ENCODE measurements at regions of chr6 and their contacts with region 1.

Region 1: DNA sequence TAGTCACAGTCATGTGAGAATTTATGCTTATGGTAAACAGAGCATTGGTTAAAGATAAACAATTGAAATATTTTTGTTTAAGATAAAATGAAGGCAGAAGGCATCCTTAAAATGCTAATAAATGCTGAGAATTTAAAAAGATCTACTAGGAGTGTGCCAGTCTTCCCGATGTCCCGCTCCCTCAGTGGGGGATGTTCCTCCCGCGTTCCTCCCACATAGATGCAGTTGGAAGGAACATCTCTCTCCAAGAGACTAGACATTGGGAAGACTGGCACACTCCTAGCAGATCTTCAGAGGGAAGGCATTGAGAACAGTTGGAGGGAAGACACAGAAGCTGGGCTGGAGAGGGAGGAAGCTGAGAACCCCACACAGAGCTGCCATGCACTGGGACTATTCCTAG is 203.3 kb downstream of the EDN1 start:
- DNase-seq: no peak
- H3K4me3 ChIP-seq: no peak overlapping the region
- H3K4me3 Mint-ChIP-seq: no peak overlapping the region
- H3K27ac Mint-ChIP-seq: no peak overlapping the region
- H3K4me1 ChIP-seq: peaks cover 9% of the 10 kb centered on the region; the same call in 1 of the 2 replicates
- H3K4me1 Mint-ChIP-seq: no peaks in the 10 kb centered on the region
- H3K27me3 ChIP-seq: no peaks in the 10 kb centered on the region
- H3K27me3 Mint-ChIP-seq: no peaks in the 10 kb centered on the region
- CTCF ChIP-seq: no peak

Region 2: GRCh38 chr6:12369781-12370262 is 123.6 kb before region 1 on chr6:
- CTCF ChIA-PET with region 1: no interaction called
- POLR2A ChIA-PET with region 1: interaction called, 13 read pairs
- intact Hi-C with region 1: no loop called
- DNase-seq: peak in 1 of 2 experiments; percentile 48
- H3K4me3 ChIP-seq: no peak overlapping the region
- H3K4me3 Mint-ChIP-seq: no peak overlapping the region
- H3K27ac Mint-ChIP-seq: peak overlapping the region; percentile 16
- H3K4me1 ChIP-seq: peaks cover 71% of the 10 kb centered on the region
- H3K4me1 Mint-ChIP-seq: peaks cover 52% of the 10 kb centered on the region
- H3K27me3 ChIP-seq: no peaks in the 10 kb centered on the region
- H3K27me3 Mint-ChIP-seq: no peaks in the 10 kb centered on the region
- CTCF ChIP-seq: no peak

Region 3: GRCh38 chr6:12516070-12516469 is 22.6 kb after region 1 on chr6:
- CTCF ChIA-PET with region 1: no interaction called
- POLR2A ChIA-PET with region 1: no interaction called
- intact Hi-C with region 1: no loop called
- DNase-seq: no peak
- H3K4me3 ChIP-seq: no peak overlapping the region
- H3K4me3 Mint-ChIP-seq: no peak overlapping the region
- H3K27ac Mint-ChIP-seq: no peak overlapping the region
- H3K4me1 ChIP-seq: no peaks in the 10 kb centered on the region; the same call in 1 of the 2 replicates
- H3K4me1 Mint-ChIP-seq: peaks cover 7% of the 10 kb centered on the region
- H3K27me3 ChIP-seq: no peaks in the 10 kb centered on the region
- H3K27me3 Mint-ChIP-seq: no peaks in the 10 kb centered on the region
- CTCF ChIP-seq: no peak

Region 4: GRCh38 chr6:13635948-13636658 is 1142.7 kb after region 1 on chr6:
- CTCF ChIA-PET with region 1: no interaction called
- POLR2A ChIA-PET with region 1: no interaction called
- intact Hi-C with region 1: no loop called
- DNase-seq: no peak
- H3K4me3 ChIP-seq: no peak overlapping the region
- H3K4me3 Mint-ChIP-seq: no peak overlapping the region
- H3K27ac Mint-ChIP-seq: no peak overlapping the region
- H3K4me1 ChIP-seq: 0 out of 2 replicates have a peak, but pooled peaks cover 4% of the 10 kb centered on the region
- H3K4me1 Mint-ChIP-seq: no peaks in the 10 kb centered on the region
- H3K27me3 ChIP-seq: no peaks in the 10 kb centered on the region
- H3K27me3 Mint-ChIP-seq: no peaks in the 10 kb centered on the region
- CTCF ChIP-seq: no peak